CD4-positive, alpha-beta memory T cell (primary cell): ENCODE measurements at regions of chr7 and their contacts with region 1.

Region 1: GRCh38 chr7:28623863-28624262 is 211.5 kb downstream of the CREB5 start:
- DNase-seq: no peak
- H3K4me3 ChIP-seq: no peak overlapping the region
- H3K4me3 Mint-ChIP-seq: no peak overlapping the region
- H3K27ac ChIP-seq: no peak overlapping the region
- H3K27ac Mint-ChIP-seq: no peak overlapping the region
- H3K4me1 ChIP-seq: no peaks in the 10 kb centered on the region
- H3K4me1 Mint-ChIP-seq: no peaks in the 10 kb centered on the region
- H3K27me3 ChIP-seq: no peaks in the 10 kb centered on the region
- H3K27me3 Mint-ChIP-seq: peaks cover 0 to 4% of the 10 kb centered on the region in 2 donors

Region 2: GRCh38 chr7:28296571-28297483 is 327.0 kb before region 1 on chr7:
- CTCF ChIA-PET with region 1: no interaction called
- POLR2A ChIA-PET with region 1: no interaction called
- intact Hi-C with region 1: loop called (anchors 2 kb)
- DNase-seq: peak in 4 of 5 donors; percentile 11 to 29 (median 22)
- H3K4me3 ChIP-seq: no peak overlapping the region
- H3K4me3 Mint-ChIP-seq: no peak overlapping the region
- H3K27ac ChIP-seq: no peak overlapping the region
- H3K27ac Mint-ChIP-seq: no peak overlapping the region
- H3K4me1 ChIP-seq: no peaks in the 10 kb centered on the region
- H3K4me1 Mint-ChIP-seq: peaks cover 0 to 2% (median 0%) of the 10 kb centered on the region in 4 donors
- H3K27me3 ChIP-seq: no peaks in the 10 kb centered on the region
- H3K27me3 Mint-ChIP-seq: peaks cover 13 to 16% of the 10 kb centered on the region in 2 donors